Sigmoid colon (tissue), 7 donors: ENCODE measurements at regions of chr1 and their contacts with region 1.

Region 1: DNA sequence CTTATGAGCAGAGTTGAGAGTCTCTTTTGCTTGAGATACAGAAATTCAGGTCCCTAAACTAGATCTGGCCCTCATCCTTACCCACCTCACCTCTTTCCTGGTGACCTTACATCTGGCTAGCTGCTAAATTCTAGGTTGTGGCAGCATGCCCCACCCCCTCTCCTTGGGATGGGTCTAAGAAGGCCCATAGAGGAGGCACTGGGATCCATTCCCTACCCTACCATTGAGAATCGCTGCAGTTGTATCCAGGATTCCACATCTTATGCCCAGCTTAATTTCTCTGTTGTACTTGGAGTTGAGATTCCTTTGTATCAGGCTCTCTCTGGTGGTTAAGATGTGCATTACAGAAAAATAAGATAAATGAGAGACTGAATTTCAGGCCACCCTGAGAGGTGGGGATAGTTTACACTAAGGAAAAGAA is 9.5 kb upstream of the TMEM39B start:
- DNase-seq: no peak
- H3K4me3 ChIP-seq: no peak overlapping the region
- H3K27ac ChIP-seq: peak overlapping the region; percentile 47 to 70 (median 58)
- H3K4me1 ChIP-seq: peaks cover 0 to 17% (median 13%) of the 10 kb centered on the region in 4 donors
- H3K27me3 ChIP-seq: no peaks in the 10 kb centered on the region
- CTCF ChIP-seq: peak; percentile 59 to 71 (median 64)
- EP300 ChIP-seq: no peak
- POLR2A ChIP-seq: no peak

Region 2: GRCh38 chr1:31762726-31763670 is 300.3 kb before region 1 on chr1:
- intact Hi-C with region 1: loop called (anchors 5 kb)
- DNase-seq: peak; percentile 81
- H3K4me3 ChIP-seq: peak overlapping the region; percentile 29 to 59 (median 55)
- H3K27ac ChIP-seq: peak overlapping the region in 1 of 4 donors; percentile 35
- H3K4me1 ChIP-seq: peaks cover 0 to 44% (median 41%) of the 10 kb centered on the region in 4 donors
- H3K27me3 ChIP-seq: peaks cover 0 to 36% (median 13%) of the 10 kb centered on the region in 3 donors
- CTCF ChIP-seq: peak in 2 of 4 experiments; percentile 48 to 72
- EP300 ChIP-seq: no peak
- POLR2A ChIP-seq: no peak

Region 3: DNA sequence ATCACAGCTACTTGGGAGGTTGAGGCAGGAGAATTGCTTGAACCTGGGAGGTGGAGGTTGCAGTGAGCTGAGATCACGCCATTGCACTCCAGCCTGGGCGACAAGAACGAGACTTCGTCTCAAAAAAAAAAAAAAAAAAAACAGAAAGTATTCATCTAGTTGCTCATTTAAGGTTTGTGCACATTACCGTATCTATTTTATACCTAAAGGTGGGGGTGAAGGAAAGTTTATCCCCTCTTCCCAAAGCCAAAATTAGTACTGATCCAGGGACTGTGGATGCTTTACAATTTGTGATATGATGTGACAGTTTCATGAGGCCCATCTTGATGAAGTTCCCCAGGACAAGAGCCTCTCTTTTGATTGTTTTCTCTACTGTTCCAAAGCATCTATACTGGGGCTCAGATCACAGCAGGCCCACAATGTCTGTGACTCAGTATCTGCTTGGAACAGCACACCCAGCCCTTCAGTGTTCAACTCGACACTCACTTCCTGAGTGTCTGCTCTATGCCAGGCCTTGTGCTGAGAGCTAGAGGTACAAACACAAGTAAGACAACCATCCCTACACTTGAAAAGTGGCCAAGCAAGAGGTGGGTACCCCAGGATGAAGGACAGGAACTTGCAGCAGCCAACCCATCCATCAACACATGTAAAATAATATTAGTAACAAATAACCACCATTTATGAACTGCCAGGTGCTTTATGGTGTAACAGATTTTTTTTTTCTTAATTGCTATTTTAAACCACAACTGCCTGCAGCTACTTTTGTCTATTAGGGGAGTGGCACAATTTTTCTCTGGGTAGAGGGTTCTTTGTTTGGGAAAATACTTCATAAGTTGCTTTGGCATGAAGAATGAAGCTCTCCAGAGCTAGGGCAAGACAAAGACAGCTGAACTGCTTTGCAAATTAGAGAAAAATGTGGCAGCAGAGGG is 78.6 kb before region 1 on chr1:
- intact Hi-C with region 1: loop called (anchors 5 kb)
- DNase-seq: no peak
- H3K4me3 ChIP-seq: peak overlapping the region in 1 of 4 donors; percentile 0
- H3K27ac ChIP-seq: peak overlapping the region; percentile 55 to 77 (median 64)
- H3K4me1 ChIP-seq: peaks cover 0 to 18% (median 12%) of the 10 kb centered on the region in 4 donors
- H3K27me3 ChIP-seq: no peaks in the 10 kb centered on the region
- CTCF ChIP-seq: no peak
- EP300 ChIP-seq: no peak
- POLR2A ChIP-seq: no peak